Naive thymus-derived CD4-positive, alpha-beta T cell (primary cell): ENCODE measurements at regions of chr7 and their contacts with region 1.

Region 1: GRCh38 chr7:28298870-28299518 is 113.3 kb upstream of the CREB5 start:
- DNase-seq: no peak
- ATAC-seq: no peak
- H3K4me3 ChIP-seq: no peak overlapping the region
- H3K4me3 Mint-ChIP-seq: no peak overlapping the region
- H3K27ac ChIP-seq: no peak overlapping the region
- H3K27ac Mint-ChIP-seq: no peak overlapping the region
- H3K4me1 ChIP-seq: no peaks in the 10 kb centered on the region
- H3K4me1 Mint-ChIP-seq: no peaks in the 10 kb centered on the region
- H3K27me3 ChIP-seq: no peaks in the 10 kb centered on the region
- H3K27me3 Mint-ChIP-seq: peaks cover 0 to 22% (median 4%) of the 10 kb centered on the region in 5 donors

Region 2: DNA sequence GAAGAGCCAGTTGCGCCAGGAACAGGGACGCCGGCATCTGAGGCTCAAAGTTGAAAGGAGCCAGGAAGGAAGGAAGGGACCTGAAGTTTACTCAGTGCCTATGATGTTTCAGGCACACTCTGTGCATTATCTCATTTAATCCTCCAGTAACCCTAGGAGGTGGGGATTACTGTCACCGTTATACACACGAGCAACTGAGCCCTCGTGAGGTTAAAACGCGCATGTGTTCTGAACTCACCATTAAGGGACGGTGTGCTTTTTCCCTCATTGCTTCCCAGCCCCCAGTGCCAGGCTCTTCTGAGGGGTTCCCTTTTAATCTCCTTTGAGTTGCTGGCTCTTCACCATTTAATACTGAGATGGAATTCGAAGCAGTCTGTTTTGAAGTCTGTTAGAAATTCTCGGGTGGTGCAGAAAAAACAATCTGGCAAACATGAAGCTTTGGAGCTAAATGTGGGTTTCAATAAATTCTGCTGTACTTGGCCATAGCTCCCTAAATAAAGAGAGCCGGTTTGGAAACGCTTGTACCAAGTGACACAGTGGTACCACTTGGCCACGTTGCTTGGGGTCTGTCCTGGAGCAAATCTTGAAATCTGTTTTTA is 456.8 kb before region 1 on chr7:
- CTCF ChIA-PET with region 1: no interaction called
- POLR2A ChIA-PET with region 1: no interaction called
- intact Hi-C with region 1: no loop called
- DNase-seq: no peak
- ATAC-seq: no peak
- H3K4me3 ChIP-seq: no peak overlapping the region
- H3K4me3 Mint-ChIP-seq: no peak overlapping the region
- H3K27ac ChIP-seq: no peak overlapping the region
- H3K27ac Mint-ChIP-seq: peak overlapping the region in 2 of 9 donors; percentile 4 to 21
- H3K4me1 ChIP-seq: peaks cover 0 to 5% of the 10 kb centered on the region in 2 donors
- H3K4me1 Mint-ChIP-seq: peaks cover 0 to 23% (median 12%) of the 10 kb centered on the region in 7 donors
- H3K27me3 ChIP-seq: no peaks in the 10 kb centered on the region
- H3K27me3 Mint-ChIP-seq: no peaks in the 10 kb centered on the region

Region 3: DNA sequence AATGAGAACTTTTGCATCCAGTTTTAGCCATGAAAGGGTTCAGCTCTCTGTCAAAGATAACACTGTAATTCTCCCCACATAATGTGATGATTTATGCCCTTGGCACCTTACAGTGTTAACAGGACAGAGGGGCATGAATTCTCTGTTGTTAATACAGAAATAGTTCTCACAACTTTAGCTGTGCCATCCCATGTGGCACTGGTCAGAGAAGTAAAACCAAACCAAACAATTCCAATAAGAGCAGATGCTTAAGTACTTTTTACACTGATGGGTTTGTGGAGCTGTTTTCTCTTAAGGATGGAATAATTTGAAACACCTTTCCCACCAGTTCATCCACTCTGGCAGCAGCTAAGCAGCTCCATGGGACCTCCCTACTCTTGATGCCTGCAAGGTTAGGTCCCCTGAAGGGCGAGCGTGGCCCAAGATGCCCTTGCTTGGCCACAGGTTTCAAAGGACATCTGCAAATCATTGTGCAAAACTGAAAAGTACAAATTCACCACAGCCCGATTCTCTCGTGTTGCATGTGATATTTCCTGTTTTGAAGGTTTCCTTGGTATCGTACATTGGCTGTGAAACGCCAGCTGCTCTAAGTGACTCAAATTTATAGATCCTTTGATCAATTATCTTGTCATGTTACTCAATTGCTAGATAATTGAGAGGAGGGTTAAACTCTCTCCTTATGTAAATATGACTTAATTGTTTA is 30.8 kb after region 1 on chr7:
- CTCF ChIA-PET with region 1: interaction called, 9 read pairs
- POLR2A ChIA-PET with region 1: no interaction called
- intact Hi-C with region 1: loop called in 1 of 2 experiments (anchors 1 kb)
- DNase-seq: peak in 7 of 9 donors; percentile 22 to 56 (median 42)
- ATAC-seq: peak; percentile 69
- H3K4me3 ChIP-seq: peak overlapping the region; percentile 15
- H3K4me3 Mint-ChIP-seq: peak overlapping the region; percentile 39 to 90 (median 82)
- H3K27ac ChIP-seq: peak overlapping the region; percentile 55
- H3K27ac Mint-ChIP-seq: peak overlapping the region; percentile 67 to 96 (median 91)
- H3K4me1 ChIP-seq: peaks cover 0 to 36% of the 10 kb centered on the region in 2 donors
- H3K4me1 Mint-ChIP-seq: peaks cover 18 to 47% (median 43%) of the 10 kb centered on the region in 7 donors
- H3K27me3 ChIP-seq: no peaks in the 10 kb centered on the region
- H3K27me3 Mint-ChIP-seq: peaks cover 0 to 4% (median 0%) of the 10 kb centered on the region in 5 donors

Region 4: DNA sequence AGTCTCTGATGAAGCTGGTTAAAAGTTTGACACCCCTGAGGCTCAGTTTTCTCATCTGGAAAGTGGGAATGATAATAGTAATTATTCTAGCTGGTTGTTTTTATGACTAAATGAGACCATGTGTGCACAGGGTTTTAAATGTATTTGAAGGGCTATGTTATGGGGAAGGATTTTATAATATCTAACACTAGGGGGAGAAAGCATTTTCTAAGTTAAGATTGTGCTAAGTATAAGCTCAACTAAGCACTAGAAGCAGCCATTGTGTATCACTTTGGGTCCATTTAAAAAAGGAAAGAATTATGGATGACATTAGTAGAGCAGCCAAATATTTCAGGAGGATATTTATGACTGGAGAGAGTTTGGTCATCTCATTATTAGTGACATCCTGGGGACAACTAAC is 63.8 kb after region 1 on chr7:
- CTCF ChIA-PET with region 1: interaction called, 5 read pairs
- POLR2A ChIA-PET with region 1: no interaction called
- intact Hi-C with region 1: loop called in 1 of 2 experiments (anchors 2 kb)
- DNase-seq: no peak
- ATAC-seq: no peak
- H3K4me3 ChIP-seq: no peak overlapping the region
- H3K4me3 Mint-ChIP-seq: no peak overlapping the region
- H3K27ac ChIP-seq: no peak overlapping the region
- H3K27ac Mint-ChIP-seq: no peak overlapping the region
- H3K4me1 ChIP-seq: no peaks in the 10 kb centered on the region
- H3K4me1 Mint-ChIP-seq: peaks cover 0 to 19% (median 5%) of the 10 kb centered on the region in 7 donors
- H3K27me3 ChIP-seq: no peaks in the 10 kb centered on the region
- H3K27me3 Mint-ChIP-seq: peaks cover 0 to 15% (median 8%) of the 10 kb centered on the region in 5 donors

Region 5: DNA sequence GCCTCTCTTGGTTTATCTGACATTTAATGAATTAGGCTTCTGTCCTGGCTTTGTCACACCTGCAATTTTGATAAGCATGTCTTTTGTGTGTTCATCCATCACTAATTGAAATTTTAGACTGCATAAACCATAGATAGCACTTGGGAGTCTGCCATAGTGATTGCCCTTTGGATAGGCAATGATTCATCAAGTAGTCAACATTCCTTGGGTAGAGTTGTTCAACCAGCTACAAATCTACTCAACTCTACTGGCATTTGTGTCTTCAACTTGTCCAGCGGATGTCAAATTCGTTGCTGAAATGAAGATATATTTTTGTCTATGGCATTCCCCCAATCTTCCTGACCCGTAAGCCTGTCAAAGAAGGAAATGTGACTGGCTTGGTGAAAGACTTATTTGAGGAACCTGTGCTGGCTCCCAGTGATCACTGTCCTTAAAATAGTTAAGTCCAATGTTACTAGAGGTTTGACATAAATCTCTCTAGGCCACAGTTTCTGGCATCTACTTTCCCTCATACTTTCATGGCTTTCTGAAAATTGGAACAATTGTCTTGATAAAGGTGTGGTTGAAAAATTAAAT is 79.7 kb after region 1 on chr7:
- CTCF ChIA-PET with region 1: no interaction called
- POLR2A ChIA-PET with region 1: no interaction called
- intact Hi-C with region 1: loop called in 1 of 2 experiments (anchors 1 kb)
- DNase-seq: no peak
- ATAC-seq: no peak
- H3K4me3 ChIP-seq: no peak overlapping the region
- H3K4me3 Mint-ChIP-seq: no peak overlapping the region
- H3K27ac ChIP-seq: no peak overlapping the region
- H3K27ac Mint-ChIP-seq: no peak overlapping the region
- H3K4me1 ChIP-seq: no peaks in the 10 kb centered on the region
- H3K4me1 Mint-ChIP-seq: no peaks in the 10 kb centered on the region
- H3K27me3 ChIP-seq: no peaks in the 10 kb centered on the region
- H3K27me3 Mint-ChIP-seq: peaks cover 0 to 9% (median 0%) of the 10 kb centered on the region in 5 donors

Region 6: DNA sequence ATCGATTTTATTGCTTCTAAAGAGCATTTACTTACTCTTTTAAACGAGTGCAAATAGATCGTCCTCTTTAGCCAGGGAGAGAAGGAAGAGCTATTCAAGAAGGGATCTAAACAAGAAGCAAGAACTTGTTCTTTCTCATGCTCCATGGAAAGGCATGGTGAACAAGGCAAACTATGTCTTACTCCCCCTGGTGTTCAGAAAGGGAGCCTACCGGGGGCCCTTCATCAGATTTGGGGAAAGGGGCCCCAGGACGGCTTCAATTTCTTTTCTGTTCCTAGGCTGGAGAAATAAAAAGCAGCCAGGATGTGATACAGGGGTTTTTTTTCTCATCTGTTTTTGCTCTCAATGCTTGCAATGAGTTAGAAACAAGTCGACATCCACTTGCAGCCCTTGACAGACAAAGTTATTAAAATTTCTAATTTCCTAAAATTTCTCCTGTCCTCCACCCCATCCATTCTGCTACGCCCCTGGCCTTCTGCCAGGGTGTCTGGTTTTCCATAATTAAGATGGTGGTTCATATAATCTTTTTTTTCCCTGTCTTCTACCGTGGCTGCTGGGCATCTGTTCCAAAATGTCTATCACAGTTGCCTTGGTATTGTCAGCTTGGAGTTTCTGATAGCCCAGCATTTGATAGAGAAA is 327.7 kb after region 1 on chr7:
- CTCF ChIA-PET with region 1: no interaction called
- POLR2A ChIA-PET with region 1: no interaction called
- intact Hi-C with region 1: loop called (anchors 1 to 5 kb)
- DNase-seq: peak in 1 of 9 donors; percentile 14
- ATAC-seq: no peak
- H3K4me3 ChIP-seq: no peak overlapping the region
- H3K4me3 Mint-ChIP-seq: no peak overlapping the region
- H3K27ac ChIP-seq: no peak overlapping the region
- H3K27ac Mint-ChIP-seq: no peak overlapping the region
- H3K4me1 ChIP-seq: no peaks in the 10 kb centered on the region
- H3K4me1 Mint-ChIP-seq: no peaks in the 10 kb centered on the region
- H3K27me3 ChIP-seq: no peaks in the 10 kb centered on the region
- H3K27me3 Mint-ChIP-seq: peaks cover 0 to 29% (median 25%) of the 10 kb centered on the region in 5 donors

Region 7: GRCh38 chr7:28853834-28854749 is 555.1 kb after region 1 on chr7:
- CTCF ChIA-PET with region 1: no interaction called
- POLR2A ChIA-PET with region 1: no interaction called
- intact Hi-C with region 1: loop called (anchors 1 to 10 kb)
- DNase-seq: peak; percentile 20 to 77 (median 56)
- ATAC-seq: peak; percentile 92
- H3K4me3 ChIP-seq: no peak overlapping the region
- H3K4me3 Mint-ChIP-seq: peak overlapping the region; percentile 67 to 90 (median 82)
- H3K27ac ChIP-seq: no peak overlapping the region
- H3K27ac Mint-ChIP-seq: peak overlapping the region in 1 of 9 donors; percentile 41
- H3K4me1 ChIP-seq: no peaks in the 10 kb centered on the region
- H3K4me1 Mint-ChIP-seq: peaks cover 6 to 12% (median 11%) of the 10 kb centered on the region in 7 donors
- H3K27me3 ChIP-seq: peaks cover 0 to 11% of the 10 kb centered on the region in 2 donors
- H3K27me3 Mint-ChIP-seq: peaks cover 51 to 71% (median 68%) of the 10 kb centered on the region in 5 donors